ENCODE measurements at regions of chr16 and their contacts with region 1.

Region 1: DNA sequence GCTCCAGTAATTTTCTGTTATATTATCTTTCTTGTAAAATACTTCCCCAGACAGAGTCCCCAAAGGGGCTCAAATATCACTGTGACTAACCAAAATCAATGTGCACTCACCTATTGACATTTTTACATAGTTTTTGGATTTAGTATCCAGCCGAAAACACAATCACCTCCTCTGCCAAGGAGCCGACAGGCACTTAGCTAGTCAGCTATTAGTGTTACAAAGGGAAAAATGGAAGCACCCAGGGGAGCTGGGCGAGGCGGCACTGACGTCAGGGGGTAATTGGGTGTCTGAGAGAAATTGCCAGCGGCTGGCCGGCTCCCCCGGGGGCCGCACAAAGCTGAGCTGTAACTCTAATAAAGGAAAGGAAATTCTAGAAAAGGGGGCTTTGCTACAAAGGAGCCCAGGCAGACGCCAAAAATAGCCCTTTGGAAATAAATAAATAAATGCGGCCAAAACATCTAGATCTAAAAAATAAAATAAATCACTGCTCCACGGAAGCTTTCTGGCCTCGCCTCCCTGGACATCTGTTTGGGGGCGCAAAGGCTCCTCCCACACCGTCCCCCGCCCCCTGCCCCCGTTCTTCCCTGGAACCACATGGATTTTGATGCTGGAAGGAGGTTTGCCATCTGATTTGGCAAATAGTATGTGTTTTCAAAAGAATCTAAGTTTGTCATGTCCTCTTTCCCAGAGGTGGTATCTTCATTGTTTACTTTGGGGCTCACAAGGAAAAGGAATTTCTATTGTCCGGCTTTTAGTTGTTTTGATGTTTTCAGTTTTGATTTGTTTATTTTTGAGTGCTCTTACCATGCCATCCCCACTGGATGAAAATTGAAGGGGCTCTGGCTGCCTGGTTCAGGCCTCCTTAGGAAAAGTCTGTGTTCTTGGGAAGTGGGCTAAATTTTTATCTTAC is 156.7 kb downstream of the ZNF423 start:
- DNase-seq: no peak
- H3K4me3 ChIP-seq: no peak overlapping the region
- H3K27ac ChIP-seq: peak overlapping the region; percentile 55 to 69
- H3K4me1 ChIP-seq: peaks cover 40% of the 10 kb centered on the region
- H3K27me3 ChIP-seq: no peaks in the 10 kb centered on the region
- CTCF ChIP-seq: no peak
- POLR2A ChIP-seq: no peak

Region 2: DNA sequence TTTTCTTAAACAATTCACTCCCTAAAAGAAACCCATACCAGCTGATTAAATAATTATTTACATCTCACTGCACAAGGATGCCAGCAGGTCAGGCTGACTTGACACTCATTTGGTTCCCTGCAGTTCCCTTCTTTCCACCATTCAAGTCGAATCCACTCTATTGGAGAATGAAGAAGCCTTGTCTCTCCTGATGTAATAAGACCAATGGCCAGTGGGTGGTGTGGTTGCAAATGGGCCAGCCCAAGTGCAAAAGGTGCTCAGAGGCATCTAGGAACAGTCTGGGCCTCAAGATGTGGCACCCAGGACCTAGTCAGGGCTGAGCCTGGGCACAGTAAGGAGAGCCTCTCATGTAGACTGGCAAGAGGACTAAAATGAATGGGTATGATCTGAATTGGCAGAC is 316.3 kb before region 1 on chr16:
- intact Hi-C with region 1: no loop called
- DNase-seq: no peak
- H3K4me3 ChIP-seq: no peak overlapping the region
- H3K27ac ChIP-seq: no peak overlapping the region
- H3K4me1 ChIP-seq: no peaks in the 10 kb centered on the region
- H3K27me3 ChIP-seq: no peaks in the 10 kb centered on the region
- CTCF ChIP-seq: no peak
- POLR2A ChIP-seq: no peak

Region 3: DNA sequence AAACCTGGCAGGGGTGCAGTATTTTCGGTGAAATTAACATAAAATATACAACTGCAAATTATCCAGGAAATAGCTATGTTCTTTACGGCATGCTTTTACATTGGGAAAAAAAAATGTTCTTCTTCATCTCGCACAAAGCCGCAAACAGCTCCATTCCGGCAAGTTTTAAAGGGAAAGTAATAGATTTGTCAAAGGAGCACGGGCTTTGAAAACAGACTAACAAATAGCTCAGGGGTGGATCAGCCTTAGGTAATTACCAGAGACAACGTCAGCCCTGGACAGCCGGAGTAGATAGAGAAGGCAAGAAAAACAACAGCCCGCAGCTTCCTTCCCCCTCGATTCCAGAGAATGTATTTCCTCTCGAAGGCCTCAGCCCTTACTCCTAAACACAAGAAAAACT is 103.1 kb before region 1 on chr16:
- intact Hi-C with region 1: no loop called
- DNase-seq: no peak
- H3K4me3 ChIP-seq: no peak overlapping the region
- H3K27ac ChIP-seq: peak overlapping the region in 1 of 2 donors; percentile 32
- H3K4me1 ChIP-seq: peaks cover 22% of the 10 kb centered on the region
- H3K27me3 ChIP-seq: no peaks in the 10 kb centered on the region
- CTCF ChIP-seq: no peak
- POLR2A ChIP-seq: no peak

Region 4: DNA sequence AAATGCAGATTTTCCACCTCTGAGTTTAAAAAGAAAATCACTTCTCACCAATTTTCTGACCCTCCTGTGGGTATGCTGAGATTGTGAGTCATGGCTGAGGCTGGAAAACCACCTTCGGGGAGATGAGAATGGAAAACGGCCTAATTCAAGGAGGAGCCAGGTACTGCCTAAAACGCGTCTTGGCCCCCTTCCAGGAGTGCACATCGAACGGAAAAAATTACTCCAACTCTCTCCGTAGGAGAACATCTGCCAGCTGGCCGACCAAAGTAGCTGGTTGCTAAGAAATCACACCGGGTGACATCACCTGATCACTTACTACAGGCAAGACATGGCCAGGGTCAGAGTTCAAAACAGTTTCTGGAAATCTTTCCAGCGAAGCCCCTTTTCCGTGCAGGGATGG is 49.1 kb after region 1 on chr16:
- intact Hi-C with region 1: loop called (anchors 10 kb)
- DNase-seq: no peak
- H3K4me3 ChIP-seq: no peak overlapping the region
- H3K27ac ChIP-seq: no peak overlapping the region
- H3K4me1 ChIP-seq: peaks cover 6% of the 10 kb centered on the region
- H3K27me3 ChIP-seq: no peaks in the 10 kb centered on the region
- CTCF ChIP-seq: no peak
- POLR2A ChIP-seq: no peak